Activated T-helper 1 cell treated with anti-CD3 and anti-CD28 coated beads, Interleukin-12 subunit alpha, Interleukin-12 subunit beta, Interleukin-2, Interleukin-4 antibody, amounts not matched to agents 30 ng/mL and 10 ng/mL and 1 ng/mL, durations not matched to agents 14 hours and 24 hours and 36 hours (primary cell): ENCODE measurements at regions of chr17 and their contacts with region 1.

Region 1: DNA sequence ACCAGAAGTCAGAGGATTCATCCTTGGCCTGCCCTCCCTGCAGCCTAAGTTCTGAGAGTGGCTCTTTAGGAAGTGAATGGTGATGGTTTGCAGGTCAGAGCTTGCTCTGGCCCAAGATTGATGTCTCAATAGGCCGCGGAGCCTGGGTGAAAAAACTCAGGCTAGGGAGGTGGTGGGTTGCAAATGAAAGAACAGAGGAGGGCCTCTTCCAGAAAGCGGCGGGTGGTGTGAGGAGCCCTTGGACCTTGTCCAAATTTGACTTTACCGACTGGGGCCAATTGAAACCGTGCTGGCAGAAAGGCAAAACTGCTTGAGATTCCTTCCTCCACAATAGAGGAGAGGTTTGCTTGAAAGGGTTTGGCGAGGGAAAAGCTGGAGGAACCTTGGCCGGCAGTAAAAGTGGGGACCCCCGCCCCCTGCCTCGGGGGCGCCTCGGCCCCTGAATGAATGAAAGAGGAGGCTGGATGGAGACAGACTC is 331.3 kb downstream of the SEC14L1 start:
- DNase-seq: no peak
- H3K4me3 Mint-ChIP-seq: peak overlapping the region; percentile 59
- H3K27ac Mint-ChIP-seq: peak overlapping the region; percentile 88
- H3K4me1 Mint-ChIP-seq: peaks cover 83% of the 10 kb centered on the region
- H3K27me3 Mint-ChIP-seq: no peaks in the 10 kb centered on the region

Region 2: GRCh38 chr17:77429919-77430752 is 41.9 kb before region 1 on chr17:
- intact Hi-C with region 1: loop called (anchors 5 kb)
- DNase-seq: peak; percentile 66
- H3K4me3 Mint-ChIP-seq: no peak overlapping the region
- H3K27ac Mint-ChIP-seq: peak overlapping the region; percentile 59
- H3K4me1 Mint-ChIP-seq: peaks cover 68% of the 10 kb centered on the region
- H3K27me3 Mint-ChIP-seq: no peaks in the 10 kb centered on the region